ENCODE measurements at regions of chr19 and their contacts with region 1.

Region 1: GRCh38 chr19:13277104-13277809 is 127.0 kb downstream of the IER2 start:
- DNase-seq: peak; percentile 58 to 60
- H3K4me3 ChIP-seq: no peak overlapping the region
- H3K27ac ChIP-seq: no peak overlapping the region
- H3K4me1 ChIP-seq: no peaks in the 10 kb centered on the region
- H3K27me3 ChIP-seq: peaks cover 18% of the 10 kb centered on the region
- CTCF ChIP-seq: peak; percentile 89

Region 2: GRCh38 chr19:12974301-12975220 is 302.7 kb before region 1 on chr19:
- CTCF ChIA-PET with region 1: interaction called, 7 read pairs
- POLR2A ChIA-PET with region 1: no interaction called
- intact Hi-C with region 1: loop called (anchors 5 kb)
- DNase-seq: no peak
- H3K4me3 ChIP-seq: no peak overlapping the region
- H3K27ac ChIP-seq: no peak overlapping the region
- H3K4me1 ChIP-seq: no peaks in the 10 kb centered on the region
- H3K27me3 ChIP-seq: no peaks in the 10 kb centered on the region
- CTCF ChIP-seq: no peak

Region 3: GRCh38 chr19:13255041-13255718 is 22.1 kb before region 1 on chr19:
- CTCF ChIA-PET with region 1: interaction called, 10 read pairs
- POLR2A ChIA-PET with region 1: no interaction called
- intact Hi-C with region 1: no loop called
- DNase-seq: no peak
- H3K4me3 ChIP-seq: no peak overlapping the region
- H3K27ac ChIP-seq: no peak overlapping the region
- H3K4me1 ChIP-seq: no peaks in the 10 kb centered on the region
- H3K27me3 ChIP-seq: no peaks in the 10 kb centered on the region
- CTCF ChIP-seq: no peak

Region 4: DNA sequence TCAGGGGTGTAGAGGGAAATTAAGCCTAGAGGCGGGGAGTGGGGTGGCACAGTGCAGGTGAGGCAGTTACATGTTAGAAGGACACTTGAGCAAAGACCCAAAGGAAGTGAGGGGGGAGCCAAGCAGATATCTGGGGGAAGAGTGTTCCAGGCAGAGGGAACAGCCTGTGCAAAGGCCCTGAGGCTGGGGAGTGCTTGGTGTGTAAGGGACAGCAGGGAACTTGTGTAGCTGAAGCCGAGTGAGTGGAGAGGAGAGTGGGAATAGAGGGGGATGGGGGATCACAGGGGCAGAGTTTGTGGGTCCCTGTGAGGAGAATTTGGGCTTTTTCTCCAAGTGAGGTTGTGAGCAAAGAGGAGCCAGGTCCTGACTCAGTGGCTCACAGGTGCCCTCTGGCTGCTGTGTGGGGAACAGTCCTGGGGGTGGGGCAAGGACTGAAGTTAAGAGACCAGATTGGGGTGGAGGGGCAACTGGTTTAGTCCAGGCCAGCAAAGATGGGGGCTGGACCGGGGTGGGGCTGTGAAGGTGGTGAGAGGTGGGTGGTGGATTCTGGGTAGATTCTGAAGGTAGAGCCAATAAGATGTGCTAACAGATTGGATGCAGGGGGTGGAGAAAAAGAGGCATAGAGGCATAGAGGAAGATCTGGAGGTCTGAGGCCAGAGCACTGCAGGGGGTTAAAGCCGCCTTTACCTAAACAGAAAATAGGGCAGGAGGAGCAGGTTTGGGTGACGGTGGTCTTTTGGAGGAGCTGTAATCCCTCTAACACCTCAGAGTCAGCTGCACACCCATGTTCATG is 153.7 kb after region 1 on chr19:
- CTCF ChIA-PET with region 1: no interaction called
- POLR2A ChIA-PET with region 1: no interaction called
- intact Hi-C with region 1: loop called (anchors 2 kb)
- DNase-seq: peak in 1 of 2 experiments; percentile 35
- H3K4me3 ChIP-seq: no peak overlapping the region
- H3K27ac ChIP-seq: no peak overlapping the region
- H3K4me1 ChIP-seq: no peaks in the 10 kb centered on the region
- H3K27me3 ChIP-seq: no peaks in the 10 kb centered on the region
- CTCF ChIP-seq: peak; percentile 81

Region 5: GRCh38 chr19:13588957-13589833 is 311.9 kb after region 1 on chr19:
- CTCF ChIA-PET with region 1: no interaction called
- POLR2A ChIA-PET with region 1: no interaction called
- intact Hi-C with region 1: loop called (anchors 1 kb)
- DNase-seq: peak in 1 of 2 experiments; percentile 69
- H3K4me3 ChIP-seq: no peak overlapping the region
- H3K27ac ChIP-seq: no peak overlapping the region
- H3K4me1 ChIP-seq: no peaks in the 10 kb centered on the region
- H3K27me3 ChIP-seq: peaks cover 29% of the 10 kb centered on the region
- CTCF ChIP-seq: peak; percentile 97

Region 6: GRCh38 chr19:13718733-13719132 is 441.5 kb after region 1 on chr19:
- CTCF ChIA-PET with region 1: no interaction called
- POLR2A ChIA-PET with region 1: no interaction called
- intact Hi-C with region 1: loop called (anchors 2 kb)
- DNase-seq: peak; percentile 18 to 57
- H3K4me3 ChIP-seq: no peak overlapping the region
- H3K27ac ChIP-seq: no peak overlapping the region
- H3K4me1 ChIP-seq: no peaks in the 10 kb centered on the region
- H3K27me3 ChIP-seq: peaks cover 56% of the 10 kb centered on the region
- CTCF ChIP-seq: peak; percentile 56